CD14-positive monocyte (primary cell): ENCODE measurements at regions of chr14 and their contacts with region 1.

Region 1: DNA sequence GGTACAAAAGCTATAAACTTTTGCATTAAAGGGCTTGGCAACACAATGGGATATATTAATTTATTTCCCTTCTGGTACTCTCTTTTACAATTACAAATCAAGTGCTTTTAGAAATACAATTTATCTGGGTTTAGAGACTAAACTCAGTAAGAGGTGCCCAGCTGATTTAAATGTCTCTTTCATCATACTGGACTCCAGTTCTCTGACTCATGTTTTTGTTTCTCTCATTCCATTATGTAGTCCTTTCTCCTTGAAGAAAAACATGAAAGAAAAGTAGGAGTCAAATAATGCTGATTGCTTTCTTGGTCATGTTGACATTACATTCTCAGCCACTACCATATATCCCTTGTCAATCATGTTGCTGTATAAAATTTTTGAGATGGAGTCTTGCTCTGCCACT is 36.3 kb upstream of the CFL2 start:
- DNase-seq: no peak
- H3K4me3 ChIP-seq: no peak overlapping the region
- H3K4me3 Mint-ChIP-seq: no peak overlapping the region
- H3K27ac ChIP-seq: no peak overlapping the region
- H3K27ac Mint-ChIP-seq: peak overlapping the region in 1 of 7 donors; percentile 3
- H3K4me1 ChIP-seq: no peaks in the 10 kb centered on the region
- H3K4me1 Mint-ChIP-seq: no peaks in the 10 kb centered on the region
- H3K27me3 ChIP-seq: no peaks in the 10 kb centered on the region
- H3K27me3 Mint-ChIP-seq: no peaks in the 10 kb centered on the region
- CTCF ChIP-seq: no peak

Region 2: DNA sequence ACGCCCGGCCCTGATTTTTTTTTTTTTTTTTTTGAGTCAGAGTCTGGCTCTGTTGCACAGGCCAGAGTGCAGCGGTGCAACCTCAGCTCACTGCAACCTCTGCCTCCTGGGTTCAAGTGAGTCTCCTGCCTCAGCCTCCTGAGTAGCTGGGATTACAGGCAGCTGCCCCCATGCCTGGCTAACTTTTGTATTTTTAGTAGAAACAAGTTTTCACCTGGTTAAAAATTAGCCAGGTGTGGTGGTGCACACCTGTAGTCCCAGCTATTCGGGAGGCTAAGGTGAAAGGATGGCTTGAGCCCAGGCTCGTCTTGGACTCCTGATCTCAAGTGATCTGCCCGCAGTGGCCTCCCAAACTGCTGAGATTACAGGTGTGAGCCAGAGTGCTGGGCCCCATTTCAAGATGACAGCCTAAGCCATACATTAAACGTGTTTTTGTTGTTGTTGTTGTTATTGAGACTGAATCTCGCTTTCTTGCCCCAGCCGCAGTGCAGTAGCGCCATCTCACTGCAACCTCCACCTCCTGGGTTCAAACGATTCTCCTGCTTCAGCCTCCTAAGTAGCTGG is 168.5 kb before region 1 on chr14:
- intact Hi-C with region 1: loop called in 1 of 2 experiments (anchors 10 kb)
- DNase-seq: no peak
- H3K4me3 ChIP-seq: no peak overlapping the region
- H3K4me3 Mint-ChIP-seq: no peak overlapping the region
- H3K27ac ChIP-seq: no peak overlapping the region
- H3K27ac Mint-ChIP-seq: no peak overlapping the region
- H3K4me1 ChIP-seq: no peaks in the 10 kb centered on the region
- H3K4me1 Mint-ChIP-seq: no peaks in the 10 kb centered on the region
- H3K27me3 ChIP-seq: no peaks in the 10 kb centered on the region
- H3K27me3 Mint-ChIP-seq: no peaks in the 10 kb centered on the region
- CTCF ChIP-seq: no peak

Region 3: DNA sequence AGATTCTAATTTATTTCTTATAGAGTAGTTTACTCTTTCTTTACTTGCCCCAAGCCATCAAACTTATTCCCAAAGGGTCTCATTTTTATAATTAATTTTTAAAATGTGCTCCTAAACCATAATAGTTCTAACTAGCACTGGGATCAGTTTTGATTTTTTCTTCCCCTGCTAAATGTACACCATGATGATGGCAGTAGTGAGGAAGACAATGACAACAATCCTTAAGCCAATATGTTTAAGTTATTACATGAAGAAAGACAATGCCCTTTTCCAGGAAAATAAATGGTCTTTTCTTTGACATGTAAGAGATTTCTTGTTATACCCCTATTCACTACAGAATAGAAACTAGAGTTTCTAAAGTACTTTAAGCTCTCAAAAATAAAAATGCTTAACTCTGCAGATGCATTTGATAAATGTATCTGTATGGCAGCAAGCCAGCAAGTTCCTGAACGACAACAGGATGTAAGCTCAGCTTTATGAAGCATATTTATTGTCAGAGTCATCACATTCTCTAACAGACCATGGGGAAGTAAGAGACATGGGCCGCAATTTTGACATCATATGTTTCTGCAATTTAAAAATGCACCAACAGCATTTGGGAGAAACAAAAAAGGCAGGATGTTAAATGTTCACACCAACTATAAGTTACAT is 84.8 kb before region 1 on chr14:
- intact Hi-C with region 1: no loop called
- DNase-seq: peak; percentile 10 to 25 (median 13)
- H3K4me3 ChIP-seq: no peak overlapping the region
- H3K4me3 Mint-ChIP-seq: no peak overlapping the region
- H3K27ac ChIP-seq: no peak overlapping the region
- H3K27ac Mint-ChIP-seq: no peak overlapping the region
- H3K4me1 ChIP-seq: peaks cover 0 to 14% of the 10 kb centered on the region in 2 donors
- H3K4me1 Mint-ChIP-seq: peaks cover 8% of the 10 kb centered on the region
- H3K27me3 ChIP-seq: no peaks in the 10 kb centered on the region
- H3K27me3 Mint-ChIP-seq: no peaks in the 10 kb centered on the region
- CTCF ChIP-seq: no peak